ENCODE measurements at regions of chr5 and their contacts with region 1.

Region 1: GRCh38 chr5:180852495-180852894 is 8.6 kb downstream of the ZFP62 start:
- DNase-seq: no peak
- ATAC-seq: no peak
- H3K4me3 ChIP-seq: no peak overlapping the region
- H3K27ac ChIP-seq: no peak overlapping the region
- H3K4me1 ChIP-seq: no peaks in the 10 kb centered on the region
- H3K27me3 ChIP-seq: no peaks in the 10 kb centered on the region
- CTCF ChIP-seq: no peak

Region 2: GRCh38 chr5:180799194-180799593 is 53.3 kb before region 1 on chr5:
- intact Hi-C with region 1: loop called (anchors 10 kb)
- DNase-seq: no peak
- ATAC-seq: no peak
- H3K4me3 ChIP-seq: no peak overlapping the region
- H3K27ac ChIP-seq: no peak overlapping the region
- H3K4me1 ChIP-seq: peaks cover 74% of the 10 kb centered on the region
- H3K27me3 ChIP-seq: no peaks in the 10 kb centered on the region
- CTCF ChIP-seq: peak; percentile 28